Activated T-helper 1 cell treated with anti-CD3 and anti-CD28 coated beads, Interleukin-12 subunit alpha, Interleukin-12 subunit beta, Interleukin-2, Interleukin-4 antibody, amounts not matched to agents 30 ng/mL and 10 ng/mL and 1 ng/mL, durations not matched to agents 14 hours and 24 hours and 36 hours (primary cell): ENCODE measurements at regions of chr16 and their contacts with region 1.

Region 1: GRCh38 chr16:83898463-83899271 is at the start of gene MLYCD:
- DNase-seq: peak; percentile 73
- H3K4me3 Mint-ChIP-seq: peak within 1 kb of the TSS; percentile 94
- H3K27ac Mint-ChIP-seq: peak within 1 kb of the TSS; percentile 77
- H3K4me1 Mint-ChIP-seq: peaks cover 27% of the 10 kb centered on the region
- H3K27me3 Mint-ChIP-seq: peaks cover 10% of the 10 kb centered on the region
- total RNA-seq, gene MLYCD: 5.0 and 6.1 TPM in 2 replicates

Region 2: DNA sequence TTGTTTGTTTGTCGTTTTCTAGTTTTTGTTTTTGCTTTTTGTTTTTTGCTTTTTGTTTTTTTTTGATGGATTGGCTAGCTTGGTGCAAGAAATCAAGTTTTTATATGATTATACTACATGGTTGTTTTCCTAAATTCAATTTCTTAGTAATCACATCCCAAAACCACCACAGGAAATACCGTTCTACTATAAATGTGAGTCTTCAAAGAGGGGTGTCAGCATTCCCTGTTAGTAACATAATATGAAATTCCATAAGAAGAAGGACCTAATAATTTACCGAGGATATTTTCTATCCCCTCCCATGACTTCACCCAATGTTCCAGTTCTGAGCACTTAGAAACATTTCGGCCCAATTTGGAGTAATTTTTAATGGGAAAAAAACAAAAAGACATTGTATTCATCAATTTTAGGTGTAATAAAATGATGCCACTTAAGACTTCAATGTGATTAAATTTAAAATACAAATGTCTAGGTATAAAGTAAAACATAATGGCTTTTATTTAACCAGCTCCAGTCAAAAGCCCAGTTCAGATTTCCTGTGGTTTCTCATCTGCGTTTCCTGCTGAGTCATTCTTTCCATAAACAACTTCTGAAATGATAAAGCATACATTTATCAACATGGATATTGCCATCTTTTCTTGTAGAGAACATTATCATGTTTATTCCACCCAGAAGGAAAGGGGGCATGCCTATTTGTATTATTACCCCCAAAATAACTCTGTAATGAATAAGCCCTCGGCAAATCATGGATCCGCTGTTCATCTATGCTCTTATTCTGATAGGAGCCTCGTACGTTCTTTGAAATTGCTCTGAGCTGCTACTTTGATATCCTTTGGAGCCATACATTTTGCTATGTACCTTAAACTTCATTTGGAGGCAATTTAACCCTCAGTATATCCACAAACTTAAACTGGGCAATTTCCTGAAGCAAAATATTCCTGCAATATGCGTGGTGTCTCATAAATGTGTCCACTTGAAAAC is 62.8 kb before region 1 on chr16:
- intact Hi-C with region 1: loop called (anchors 1 kb)
- DNase-seq: peak; percentile 11
- H3K4me3 Mint-ChIP-seq: no peak overlapping the region
- H3K27ac Mint-ChIP-seq: peak overlapping the region; percentile 43
- H3K4me1 Mint-ChIP-seq: peaks cover 17% of the 10 kb centered on the region
- H3K27me3 Mint-ChIP-seq: peaks cover 46% of the 10 kb centered on the region